IMR-90 (cell line): ENCODE measurements at regions of chr18 and their contacts with region 1.

Region 1: GRCh38 chr18:3129053-3129864 is 90.5 kb downstream of the MYOM1 start:
- DNase-seq: peak; percentile 78
- ATAC-seq: peak; percentile 100
- H3K4me3 ChIP-seq: no peak overlapping the region
- H3K27ac ChIP-seq: no peak overlapping the region
- H3K4me1 ChIP-seq: no peaks in the 10 kb centered on the region
- H3K27me3 ChIP-seq: no peaks in the 10 kb centered on the region; the same call in 1 of the 2 replicates
- CTCF ChIP-seq: peak; percentile 83
- POLR2A ChIP-seq: no peak
- RAD21 ChIP-seq: peak; percentile 68

Region 2: DNA sequence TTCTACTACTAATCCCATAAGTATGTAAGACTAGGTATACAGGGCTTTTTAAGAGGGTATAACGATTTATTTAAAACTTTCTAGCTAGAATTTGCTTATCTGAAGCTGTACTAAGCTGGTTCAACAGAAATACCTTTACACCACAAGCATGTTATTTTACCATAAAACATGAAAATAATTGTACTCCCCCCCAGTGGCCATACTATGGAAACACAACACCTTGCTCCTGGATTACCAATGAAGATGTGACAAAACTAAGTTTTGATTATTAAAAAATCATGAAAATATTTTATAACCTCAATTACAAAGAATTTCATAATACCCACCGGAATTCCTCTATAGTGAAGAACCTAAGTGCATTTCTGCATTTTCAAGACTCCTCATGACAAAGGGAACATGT is 143.6 kb before region 1 on chr18:
- CTCF ChIA-PET with region 1: no interaction called
- POLR2A ChIA-PET with region 1: no interaction called
- dilution Hi-C with region 1: no loop called
- in situ Hi-C with region 1: no loop called
- intact Hi-C with region 1: loop called (anchors 5 kb)
- DNase-seq: peak; percentile 54
- ATAC-seq: no peak
- H3K4me3 ChIP-seq: no peak overlapping the region
- H3K27ac ChIP-seq: peak overlapping the region; percentile 27; the same call in 1 of the 2 replicates
- H3K4me1 ChIP-seq: peaks cover 30% of the 10 kb centered on the region
- H3K27me3 ChIP-seq: no peaks in the 10 kb centered on the region
- CTCF ChIP-seq: peak; percentile 51
- POLR2A ChIP-seq: no peak
- RAD21 ChIP-seq: peak; percentile 48

Region 3: GRCh38 chr18:3177902-3178687 is 48.8 kb after region 1 on chr18:
- CTCF ChIA-PET with region 1: no interaction called
- POLR2A ChIA-PET with region 1: no interaction called
- dilution Hi-C with region 1: no loop called
- in situ Hi-C with region 1: no loop called
- intact Hi-C with region 1: no loop called
- DNase-seq: peak; percentile 19
- ATAC-seq: no peak
- H3K4me3 ChIP-seq: no peak overlapping the region
- H3K27ac ChIP-seq: no peak overlapping the region
- H3K4me1 ChIP-seq: peaks cover 10% of the 10 kb centered on the region
- H3K27me3 ChIP-seq: peaks cover 4% of the 10 kb centered on the region; the same call in 1 of the 2 replicates
- CTCF ChIP-seq: no peak
- POLR2A ChIP-seq: no peak
- RAD21 ChIP-seq: no peak